PC-9 (cell line): ENCODE measurements at regions of chr7 and their contacts with region 1.

Region 1: GRCh38 chr7:23020742-23021401 is 6.9 kb upstream of the HYCC1 start:
- DNase-seq: peak; percentile 34 to 94
- H3K4me3 ChIP-seq: no peak overlapping the region
- H3K27ac ChIP-seq: peak overlapping the region; percentile 84
- H3K4me1 ChIP-seq: peaks cover 21% of the 10 kb centered on the region
- H3K27me3 ChIP-seq: no peaks in the 10 kb centered on the region
- CTCF ChIP-seq: no peak

Region 2: GRCh38 chr7:22624795-22625194 is 396.1 kb before region 1 on chr7:
- CTCF ChIA-PET with region 1: no interaction called
- POLR2A ChIA-PET with region 1: interaction called, 38 read pairs
- intact Hi-C with region 1: no loop called
- DNase-seq: no peak
- H3K4me3 ChIP-seq: no peak overlapping the region
- H3K27ac ChIP-seq: no peak overlapping the region
- H3K4me1 ChIP-seq: no peaks in the 10 kb centered on the region
- H3K27me3 ChIP-seq: no peaks in the 10 kb centered on the region
- CTCF ChIP-seq: no peak

Region 3: GRCh38 chr7:22697876-22698606 is 322.8 kb before region 1 on chr7:
- CTCF ChIA-PET with region 1: no interaction called
- POLR2A ChIA-PET with region 1: no interaction called
- intact Hi-C with region 1: no loop called
- DNase-seq: peak; percentile 35 to 60
- H3K4me3 ChIP-seq: no peak overlapping the region
- H3K27ac ChIP-seq: no peak overlapping the region
- H3K4me1 ChIP-seq: peaks cover 15% of the 10 kb centered on the region; the same call in 1 of the 2 replicates
- H3K27me3 ChIP-seq: no peaks in the 10 kb centered on the region
- CTCF ChIP-seq: no peak

Region 4: DNA sequence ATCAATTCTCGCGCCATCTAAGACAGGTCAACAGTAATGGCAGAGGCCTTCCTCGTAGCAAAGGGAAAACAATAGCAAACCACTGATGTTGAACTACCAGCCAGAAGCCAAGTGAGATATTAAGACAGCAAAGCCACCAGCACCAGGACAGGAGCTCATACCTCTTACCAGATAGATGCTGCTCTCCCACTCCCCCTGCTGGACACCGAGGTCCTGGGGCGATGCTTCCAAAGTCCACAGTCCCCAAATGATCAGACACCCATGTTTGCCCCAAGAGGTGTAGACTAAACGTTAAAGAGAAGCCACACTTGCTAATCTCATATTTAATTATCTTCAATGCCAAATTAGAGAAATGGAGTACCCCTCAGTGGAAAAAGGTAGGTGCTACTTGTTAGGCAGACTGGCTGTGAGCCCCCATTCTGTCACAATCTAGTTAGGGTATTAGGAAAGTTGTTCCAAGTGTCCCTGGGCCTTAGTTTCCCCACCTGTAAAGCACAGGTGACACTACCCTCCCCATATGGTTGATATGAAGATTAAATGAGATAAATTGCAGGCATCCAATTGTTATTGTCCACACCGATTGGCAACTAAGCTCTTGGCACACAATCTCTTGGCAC is 238.1 kb before region 1 on chr7:
- CTCF ChIA-PET with region 1: interaction called, 13 read pairs
- POLR2A ChIA-PET with region 1: no interaction called
- intact Hi-C with region 1: no loop called
- DNase-seq: peak; percentile 54 to 70
- H3K4me3 ChIP-seq: no peak overlapping the region
- H3K27ac ChIP-seq: no peak overlapping the region
- H3K4me1 ChIP-seq: no peaks in the 10 kb centered on the region; the same call in 1 of the 2 replicates
- H3K27me3 ChIP-seq: no peaks in the 10 kb centered on the region
- CTCF ChIP-seq: peak; percentile 95

Region 5: DNA sequence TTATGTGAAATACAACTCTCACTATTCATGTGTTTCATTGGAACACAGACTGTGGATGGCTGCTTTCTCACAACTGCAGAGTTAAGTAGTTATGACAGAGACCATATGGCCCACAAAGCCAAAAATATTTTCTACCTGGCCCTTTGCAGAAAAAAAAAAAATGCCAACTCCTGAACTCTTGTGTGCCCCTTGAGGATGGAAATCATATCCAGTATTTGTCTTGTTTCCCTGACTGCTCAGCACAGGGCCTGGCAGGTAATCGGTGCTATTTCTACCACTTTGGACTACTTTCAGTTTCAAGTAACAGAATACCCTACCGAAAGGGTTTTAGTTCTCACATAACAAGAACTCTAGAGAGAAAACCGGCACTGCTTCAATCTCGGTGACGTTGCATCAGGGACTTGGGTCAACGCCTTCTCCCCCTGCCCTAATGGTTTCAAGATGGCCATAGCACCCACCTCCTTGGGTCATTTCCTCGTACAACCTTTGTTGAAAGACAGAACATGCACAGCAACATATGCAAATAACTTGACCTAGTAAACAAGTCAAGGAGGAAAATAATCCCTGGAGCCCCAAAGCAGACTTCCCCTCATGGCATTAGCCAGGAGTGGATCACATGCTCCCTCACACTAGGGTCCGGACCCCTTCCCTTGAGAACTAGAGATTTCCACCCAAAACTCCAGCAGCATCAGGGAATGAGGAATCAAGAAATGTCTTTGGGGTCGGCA is 213.9 kb after region 1 on chr7:
- CTCF ChIA-PET with region 1: no interaction called
- POLR2A ChIA-PET with region 1: no interaction called
- intact Hi-C with region 1: no loop called
- DNase-seq: no peak
- H3K4me3 ChIP-seq: no peak overlapping the region
- H3K27ac ChIP-seq: no peak overlapping the region
- H3K4me1 ChIP-seq: no peaks in the 10 kb centered on the region
- H3K27me3 ChIP-seq: no peaks in the 10 kb centered on the region
- CTCF ChIP-seq: no peak